Naive thymus-derived CD4-positive, alpha-beta T cell (primary cell): ENCODE measurements at regions of chr1 and their contacts with region 1.

Region 1: DNA sequence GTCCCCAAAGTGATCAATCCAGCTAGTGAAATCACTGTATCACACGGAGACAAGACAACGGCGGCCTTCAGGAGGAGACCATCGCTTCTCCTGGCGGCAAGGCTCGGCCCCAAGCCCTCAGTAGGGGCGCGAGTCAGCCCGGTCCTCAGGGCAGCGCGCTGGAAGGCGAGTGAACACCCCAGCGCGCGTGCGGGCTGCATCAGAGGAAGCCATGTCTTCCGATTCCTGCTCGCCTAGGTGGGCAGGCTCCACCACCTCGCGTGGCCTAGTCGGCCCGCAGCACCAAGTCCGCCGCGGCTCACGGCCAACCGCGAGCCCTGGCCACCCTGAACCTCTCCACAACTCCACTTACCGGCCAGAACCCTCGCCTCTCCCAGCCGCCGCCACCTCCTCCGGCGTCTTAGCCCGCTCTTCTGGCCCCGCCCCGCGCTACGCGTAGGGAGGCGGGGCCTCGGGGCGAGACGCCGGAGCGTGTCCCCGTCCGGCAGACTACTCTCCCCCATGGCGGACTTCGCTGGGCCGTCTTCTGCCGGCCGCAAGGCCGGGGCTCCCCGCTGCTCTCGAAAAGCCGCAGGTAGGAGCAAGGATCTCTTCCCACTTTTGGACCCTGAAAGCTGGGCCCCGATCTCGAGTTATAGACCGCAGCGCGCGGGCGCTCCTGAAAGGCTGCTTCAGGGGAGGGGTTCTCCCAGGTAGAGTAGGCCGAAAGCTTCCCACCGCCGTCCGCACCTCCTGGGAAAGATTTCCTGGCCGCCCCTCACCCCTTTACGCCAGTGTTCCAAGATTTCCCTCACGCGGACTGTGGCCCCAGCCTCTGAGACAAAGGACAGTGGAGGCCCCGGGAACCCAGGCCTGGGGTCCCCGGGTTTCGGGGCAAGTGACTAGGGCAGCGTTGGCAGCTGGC is at the starts of genes GLMN and RPAP2:
- DNase-seq: peak; percentile 55 to 86 (median 75)
- ATAC-seq: peak; percentile 97
- H3K4me3 ChIP-seq: peak within 1 kb of the TSS; percentile 93
- H3K4me3 Mint-ChIP-seq: peak within 1 kb of the TSS; percentile 93 to 99 (median 97)
- H3K27ac ChIP-seq: peak within 1 kb of the TSS; percentile 98
- H3K27ac Mint-ChIP-seq: peak within 1 kb of the TSS; percentile 91 to 99 (median 97)
- H3K4me1 ChIP-seq: peaks cover 10 to 19% of the 10 kb centered on the region in 2 donors
- H3K4me1 Mint-ChIP-seq: peaks cover 30 to 61% (median 48%) of the 10 kb centered on the region in 7 donors
- H3K27me3 ChIP-seq: no peaks in the 10 kb centered on the region
- H3K27me3 Mint-ChIP-seq: no peaks in the 10 kb centered on the region
- total RNA-seq, gene GLMN: 13.9 to 27.0 (median 14.3) TPM
- total RNA-seq, gene RPAP2: 29.5 to 50.7 (median 42.3) TPM

Region 2: GRCh38 chr1:92201973-92202372 is 96.9 kb before region 1 on chr1:
- CTCF ChIA-PET with region 1: interaction called, 5 read pairs
- POLR2A ChIA-PET with region 1: no interaction called
- intact Hi-C with region 1: loop called in 1 of 2 experiments (anchors 5 kb)
- DNase-seq: peak in 6 of 9 donors; percentile 13 to 38 (median 32)
- ATAC-seq: peak; percentile 24
- H3K4me3 ChIP-seq: no peak overlapping the region
- H3K4me3 Mint-ChIP-seq: peak overlapping the region in 9 of 10 donors; percentile 6 to 79 (median 44)
- H3K27ac ChIP-seq: peak overlapping the region; percentile 49
- H3K27ac Mint-ChIP-seq: peak overlapping the region; percentile 66 to 86 (median 78)
- H3K4me1 ChIP-seq: peaks cover 0 to 10% of the 10 kb centered on the region in 2 donors
- H3K4me1 Mint-ChIP-seq: peaks cover 9 to 29% (median 22%) of the 10 kb centered on the region in 7 donors
- H3K27me3 ChIP-seq: no peaks in the 10 kb centered on the region
- H3K27me3 Mint-ChIP-seq: no peaks in the 10 kb centered on the region

Region 3: DNA sequence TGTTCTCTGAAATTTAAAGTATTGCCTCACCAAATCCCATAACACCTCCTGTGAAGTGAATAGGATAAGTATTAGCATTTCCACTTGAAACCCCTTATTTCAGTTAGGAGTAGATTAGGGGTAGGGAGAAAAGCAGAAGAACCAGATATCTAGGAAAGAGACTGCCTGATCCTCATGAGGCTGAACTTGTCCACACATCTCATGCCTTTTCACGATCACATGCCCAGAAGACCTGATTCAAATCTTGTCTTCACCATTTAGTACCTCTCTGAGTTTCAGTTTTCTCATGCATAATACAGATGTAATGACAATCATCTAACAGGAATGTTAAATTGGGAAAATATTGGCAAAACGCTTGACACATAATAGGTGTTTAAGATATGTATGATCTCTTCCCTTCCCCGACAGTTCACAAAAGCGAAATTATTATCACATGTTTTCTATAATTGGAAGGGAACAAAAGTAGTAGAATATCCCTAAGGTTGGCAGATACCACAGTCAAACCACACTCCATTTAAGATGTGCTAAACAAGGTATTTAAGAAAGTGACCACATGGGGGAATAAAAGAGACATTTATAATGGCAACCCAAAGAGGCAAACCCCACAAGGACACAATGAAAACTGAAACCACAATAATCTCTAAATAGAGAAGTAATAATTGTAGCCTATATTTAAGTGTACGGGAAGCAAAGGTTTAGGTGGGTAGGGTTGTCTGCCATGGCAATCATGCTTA is 162.7 kb after region 1 on chr1:
- CTCF ChIA-PET with region 1: no interaction called
- POLR2A ChIA-PET with region 1: no interaction called
- intact Hi-C with region 1: no loop called
- DNase-seq: no peak
- ATAC-seq: peak; percentile 18
- H3K4me3 ChIP-seq: no peak overlapping the region
- H3K4me3 Mint-ChIP-seq: peak overlapping the region in 3 of 10 donors; percentile 8 to 49 (median 32)
- H3K27ac ChIP-seq: no peak overlapping the region
- H3K27ac Mint-ChIP-seq: peak overlapping the region in 1 of 9 donors; percentile 68
- H3K4me1 ChIP-seq: peaks cover 23 to 27% of the 10 kb centered on the region in 2 donors
- H3K4me1 Mint-ChIP-seq: peaks cover 30 to 63% (median 57%) of the 10 kb centered on the region in 7 donors
- H3K27me3 ChIP-seq: no peaks in the 10 kb centered on the region
- H3K27me3 Mint-ChIP-seq: no peaks in the 10 kb centered on the region

Region 4: DNA sequence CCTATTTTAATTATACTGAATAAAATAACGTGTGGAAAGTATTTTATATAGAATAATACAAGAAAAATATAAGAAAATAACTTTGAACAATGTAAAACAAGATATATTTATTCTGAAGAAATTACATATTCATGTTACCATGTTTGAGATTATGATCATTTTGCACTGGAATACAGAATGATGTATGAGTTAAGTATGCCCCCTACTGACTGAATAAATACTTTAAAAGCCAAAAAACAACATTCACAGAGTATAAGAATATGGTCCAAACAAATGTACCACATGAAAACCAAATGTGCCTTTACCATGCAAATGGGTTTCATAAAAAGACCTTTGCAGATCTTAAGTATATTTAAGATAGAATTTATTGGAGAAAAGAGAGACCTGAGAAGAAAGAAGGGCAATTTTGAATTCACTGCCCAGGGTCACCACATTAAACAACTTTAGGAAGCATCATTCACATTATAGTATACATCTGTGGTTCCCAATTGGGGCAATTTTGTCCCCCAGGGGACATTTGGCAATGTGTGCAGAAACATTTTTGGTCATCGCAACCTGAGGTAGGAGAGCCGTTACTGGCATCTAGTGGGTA is 324.5 kb after region 1 on chr1:
- CTCF ChIA-PET with region 1: interaction called, 4 read pairs
- POLR2A ChIA-PET with region 1: interaction called, 3 read pairs
- intact Hi-C with region 1: loop called (anchors 5 kb)
- DNase-seq: peak in 6 of 9 donors; percentile 4 to 42 (median 35)
- ATAC-seq: peak; percentile 49
- H3K4me3 ChIP-seq: no peak overlapping the region
- H3K4me3 Mint-ChIP-seq: no peak overlapping the region
- H3K27ac ChIP-seq: no peak overlapping the region
- H3K27ac Mint-ChIP-seq: no peak overlapping the region
- H3K4me1 ChIP-seq: no peaks in the 10 kb centered on the region
- H3K4me1 Mint-ChIP-seq: no peaks in the 10 kb centered on the region
- H3K27me3 ChIP-seq: no peaks in the 10 kb centered on the region
- H3K27me3 Mint-ChIP-seq: peaks cover 0 to 4% (median 0%) of the 10 kb centered on the region in 5 donors

Region 5: GRCh38 chr1:92831762-92832536 is 533.1 kb after region 1 on chr1 and contains the start of gene RPL5:
- CTCF ChIA-PET with region 1: no interaction called
- POLR2A ChIA-PET with region 1: no interaction called
- intact Hi-C with region 1: loop called in 1 of 2 experiments (anchors 2 kb)
- DNase-seq: peak; percentile 94 to 99 (median 98)
- ATAC-seq: peak; percentile 95
- H3K4me3 ChIP-seq: peak within 1 kb of the TSS; percentile 94
- H3K4me3 Mint-ChIP-seq: peak within 1 kb of the TSS; percentile 94 to 100 (median 98)
- H3K27ac ChIP-seq: peak within 1 kb of the TSS; percentile 94
- H3K27ac Mint-ChIP-seq: peak within 1 kb of the TSS; percentile 98 to 100 (median 99)
- H3K4me1 ChIP-seq: peaks cover 16 to 30% of the 10 kb centered on the region in 2 donors
- H3K4me1 Mint-ChIP-seq: peaks cover 29 to 54% (median 44%) of the 10 kb centered on the region in 7 donors
- H3K27me3 ChIP-seq: no peaks in the 10 kb centered on the region
- H3K27me3 Mint-ChIP-seq: peaks cover 0 to 5% (median 0%) of the 10 kb centered on the region in 5 donors
- total RNA-seq, gene RPL5: 764 to 1,693 (median 1,596) TPM